ENCODE measurements at regions of chr5 and their contacts with region 1.

Region 1: GRCh38 chr5:80083101-80083890 is 48.1 kb downstream of the THBS4 start:
- DNase-seq: peak in 1 of 2 donors; percentile 65
- H3K4me3 ChIP-seq: peak overlapping the region; percentile 42 to 54
- H3K27ac ChIP-seq: peak overlapping the region; percentile 77 to 81
- H3K4me1 ChIP-seq: no peaks in the 10 kb centered on the region
- H3K27me3 ChIP-seq: no peaks in the 10 kb centered on the region
- CTCF ChIP-seq: peak; percentile 49 to 72 (median 60)

Region 2: DNA sequence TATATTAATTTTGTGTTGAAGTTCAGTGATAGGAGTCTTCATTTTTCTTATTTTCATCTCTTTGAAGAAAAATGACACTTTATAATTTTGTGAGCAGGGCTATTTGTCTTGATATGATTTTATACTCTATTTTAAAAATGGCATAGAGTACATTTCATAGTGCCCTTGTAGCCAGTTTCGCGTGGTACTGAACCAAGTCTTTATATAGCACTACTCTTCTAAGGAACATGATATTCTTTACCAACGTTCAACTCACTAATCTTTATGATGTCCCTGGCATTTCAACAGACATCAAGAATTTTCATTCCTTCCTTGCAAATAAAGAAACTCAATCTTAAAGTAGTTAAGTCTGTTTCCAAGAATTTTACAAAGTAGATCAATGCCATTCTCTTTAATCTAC is 527.9 kb before region 1 on chr5:
- intact Hi-C with region 1: loop called (anchors 2 kb)
- DNase-seq: no peak
- H3K4me3 ChIP-seq: no peak overlapping the region
- H3K27ac ChIP-seq: no peak overlapping the region
- H3K4me1 ChIP-seq: no peaks in the 10 kb centered on the region
- H3K27me3 ChIP-seq: no peaks in the 10 kb centered on the region
- CTCF ChIP-seq: no peak

Region 3: GRCh38 chr5:79857714-79858409 is 225.4 kb before region 1 on chr5:
- intact Hi-C with region 1: loop called (anchors 5 kb)
- DNase-seq: peak in 1 of 2 donors; percentile 76
- H3K4me3 ChIP-seq: no peak overlapping the region
- H3K27ac ChIP-seq: no peak overlapping the region
- H3K4me1 ChIP-seq: no peaks in the 10 kb centered on the region
- H3K27me3 ChIP-seq: no peaks in the 10 kb centered on the region
- CTCF ChIP-seq: peak; percentile 61 to 91 (median 90)

Region 4: GRCh38 chr5:79878721-79879336 is 204.5 kb before region 1 on chr5:
- intact Hi-C with region 1: loop called (anchors 5 kb)
- DNase-seq: no peak
- H3K4me3 ChIP-seq: no peak overlapping the region
- H3K27ac ChIP-seq: no peak overlapping the region
- H3K4me1 ChIP-seq: no peaks in the 10 kb centered on the region
- H3K27me3 ChIP-seq: no peaks in the 10 kb centered on the region
- CTCF ChIP-seq: peak in 1 of 3 experiments; percentile 6

Region 5: GRCh38 chr5:79990598-79991507 is 92.4 kb before region 1 on chr5 and contains the start of gene MTX3:
- intact Hi-C with region 1: loop called (anchors 1 kb)
- DNase-seq: peak; percentile 30 to 88
- H3K4me3 ChIP-seq: peak within 1 kb of the TSS; percentile 64 to 89
- H3K27ac ChIP-seq: peak within 1 kb of the TSS; percentile 56 to 69
- H3K4me1 ChIP-seq: peaks cover 0 to 8% of the 10 kb centered on the region in 2 donors
- H3K27me3 ChIP-seq: no peaks in the 10 kb centered on the region
- CTCF ChIP-seq: no peak
- total RNA-seq, gene MTX3: 7.5 TPM

Region 6: DNA sequence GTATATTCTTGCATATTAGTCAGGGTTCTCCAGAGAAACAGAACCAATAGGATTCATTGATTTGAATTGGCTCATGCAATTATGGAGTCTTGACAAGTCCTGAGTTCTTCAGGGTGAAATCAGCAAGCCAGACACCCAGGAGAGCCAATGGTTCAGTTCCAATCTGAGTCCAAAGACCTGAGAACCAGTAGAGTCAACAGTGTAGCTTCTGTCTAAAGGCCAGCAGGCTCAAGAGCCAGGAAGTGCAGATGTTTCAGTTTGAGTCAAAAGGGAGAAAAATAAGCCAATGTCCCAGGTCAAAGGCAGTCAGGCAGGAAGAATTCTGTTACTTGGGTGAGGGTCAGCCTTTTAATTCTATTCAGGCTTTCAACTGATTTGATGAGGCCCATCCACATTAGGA is 524.5 kb after region 1 on chr5:
- intact Hi-C with region 1: no loop called
- DNase-seq: no peak
- H3K4me3 ChIP-seq: no peak overlapping the region
- H3K27ac ChIP-seq: no peak overlapping the region
- H3K4me1 ChIP-seq: no peaks in the 10 kb centered on the region
- H3K27me3 ChIP-seq: no peaks in the 10 kb centered on the region
- CTCF ChIP-seq: no peak